Uterus (tissue), 4 donors: ENCODE measurements at regions of chr7 and their contacts with region 1.

Region 1: GRCh38 chr7:120436487-120437060 is 163.6 kb downstream of the KCND2 start:
- DNase-seq: no peak
- H3K4me3 ChIP-seq: no peak overlapping the region
- H3K27ac ChIP-seq: no peak overlapping the region
- H3K4me1 ChIP-seq: no peaks in the 10 kb centered on the region
- H3K27me3 ChIP-seq: no peaks in the 10 kb centered on the region
- CTCF ChIP-seq: no peak
- POLR2A ChIP-seq: no peak

Region 2: DNA sequence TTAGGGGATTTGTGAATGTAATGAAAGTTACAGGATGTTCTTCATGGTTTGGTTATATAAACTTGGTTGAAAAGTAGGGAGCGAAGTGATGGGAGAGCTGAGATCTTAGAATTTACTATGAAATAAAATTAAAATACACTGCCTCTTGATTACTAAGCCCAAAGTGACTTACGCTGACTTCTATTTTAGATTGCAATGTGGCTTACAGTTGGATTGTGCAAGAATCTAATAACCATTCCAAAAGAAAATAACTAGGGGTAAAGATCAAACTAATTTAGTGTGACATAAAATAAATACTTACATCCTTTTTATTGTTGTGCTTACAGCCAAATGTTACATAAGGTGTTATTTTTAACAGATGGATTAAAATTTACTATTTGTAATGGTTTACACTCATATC is 907.5 kb after region 1 on chr7:
- intact Hi-C with region 1: loop called (anchors 10 kb)
- DNase-seq: no peak
- H3K4me3 ChIP-seq: no peak overlapping the region
- H3K27ac ChIP-seq: no peak overlapping the region
- H3K4me1 ChIP-seq: no peaks in the 10 kb centered on the region
- H3K27me3 ChIP-seq: no peaks in the 10 kb centered on the region
- CTCF ChIP-seq: no peak
- POLR2A ChIP-seq: no peak